Activated naive CD4-positive, alpha-beta T cell treated with anti-CD3 and anti-CD28 coated beads for 36 hours (primary cell): ENCODE measurements at regions of chr11 and their contacts with region 1.

Region 1: DNA sequence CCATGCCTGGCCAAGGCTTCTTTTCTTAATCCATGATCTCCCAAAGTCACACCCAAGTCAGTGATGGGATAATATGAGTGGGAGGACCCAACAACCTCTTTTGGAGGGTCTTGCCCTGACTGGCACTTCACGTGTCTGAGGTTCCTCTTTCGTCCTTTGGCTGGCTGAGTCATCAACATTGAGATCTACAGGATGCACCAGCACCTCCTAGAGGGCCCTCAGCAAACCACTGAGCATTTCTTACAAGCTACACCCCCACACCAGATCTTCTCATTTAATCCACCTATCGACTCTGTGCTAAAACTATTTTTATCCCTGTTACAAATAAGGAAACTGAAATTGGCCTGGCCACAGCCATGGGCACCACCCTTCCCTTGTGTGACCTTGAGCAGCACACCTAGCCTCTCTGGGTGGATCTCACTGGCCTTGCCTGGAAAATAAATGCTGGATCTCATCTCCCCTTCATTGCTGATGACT is 63.4 kb downstream of the FLI1 start:
- DNase-seq: peak; percentile 85
- H3K4me3 Mint-ChIP-seq: peak overlapping the region; percentile 14
- H3K27ac Mint-ChIP-seq: peak overlapping the region; percentile 86
- H3K4me1 Mint-ChIP-seq: peaks cover 74% of the 10 kb centered on the region
- H3K27me3 Mint-ChIP-seq: no peaks in the 10 kb centered on the region

Region 2: GRCh38 chr11:128039140-128040021 is 717.9 kb before region 1 on chr11:
- CTCF ChIA-PET with region 1: no interaction called
- intact Hi-C with region 1: loop called (anchors 5 kb)
- DNase-seq: peak; percentile 89
- H3K4me3 Mint-ChIP-seq: peak overlapping the region; percentile 40
- H3K27ac Mint-ChIP-seq: peak overlapping the region; percentile 92
- H3K4me1 Mint-ChIP-seq: peaks cover 47% of the 10 kb centered on the region
- H3K27me3 Mint-ChIP-seq: no peaks in the 10 kb centered on the region

Region 3: GRCh38 chr11:128195057-128195751 is 562.1 kb before region 1 on chr11:
- CTCF ChIA-PET with region 1: interaction called, 6 read pairs
- intact Hi-C with region 1: loop called (anchors 5 kb)
- DNase-seq: peak; percentile 77
- H3K4me3 Mint-ChIP-seq: peak overlapping the region; percentile 6
- H3K27ac Mint-ChIP-seq: peak overlapping the region; percentile 32
- H3K4me1 Mint-ChIP-seq: peaks cover 42% of the 10 kb centered on the region
- H3K27me3 Mint-ChIP-seq: no peaks in the 10 kb centered on the region

Region 4: DNA sequence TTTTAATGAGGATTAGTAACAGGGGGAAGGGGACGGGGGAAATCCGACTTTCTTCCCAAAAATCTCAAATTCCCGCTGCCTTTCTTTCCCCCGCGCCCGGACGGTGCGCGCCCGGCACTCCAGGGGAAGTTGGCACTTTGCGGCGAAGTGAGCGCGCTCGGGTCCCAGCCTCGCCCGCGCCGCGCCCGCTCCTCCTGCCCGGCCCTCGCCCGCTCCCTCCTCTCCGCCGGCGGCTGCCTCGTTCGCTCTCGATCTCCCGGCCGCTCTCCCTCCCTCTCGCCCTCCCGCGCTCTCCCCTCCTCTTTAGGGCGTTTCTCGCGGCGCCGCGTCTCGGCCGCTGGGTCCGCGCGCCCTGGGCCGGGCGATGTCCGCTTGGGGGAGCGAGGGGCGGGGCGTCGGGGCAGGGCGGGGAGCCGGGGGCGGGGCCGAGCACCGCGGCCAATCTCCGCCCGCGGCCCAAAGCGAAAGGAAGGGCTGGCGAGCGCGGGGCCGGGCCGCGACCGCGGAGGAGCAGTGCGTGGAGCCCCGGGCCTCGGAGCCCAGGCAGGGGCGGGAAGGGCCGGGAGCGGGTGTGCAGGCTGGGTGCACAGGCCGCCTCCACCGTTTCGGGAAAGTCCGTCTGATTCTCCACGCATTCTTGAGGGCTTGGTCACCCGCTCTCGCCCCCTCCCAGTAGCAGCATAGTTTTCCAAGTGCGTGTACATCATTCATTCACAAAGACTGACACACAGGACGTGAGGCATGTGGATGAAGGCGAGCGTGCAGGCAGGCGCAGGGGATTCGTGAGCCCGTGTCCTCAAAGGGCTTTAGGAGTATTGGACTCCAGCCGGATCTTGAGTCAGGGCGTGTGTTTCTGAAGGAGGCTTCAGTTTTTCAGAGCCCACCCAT is 235.0 kb before region 1 on chr11:
- CTCF ChIA-PET with region 1: no interaction called
- intact Hi-C with region 1: loop called (anchors 1 kb)
- DNase-seq: peak; percentile 92
- H3K4me3 Mint-ChIP-seq: peak overlapping the region; percentile 96
- H3K27ac Mint-ChIP-seq: peak overlapping the region; percentile 97
- H3K4me1 Mint-ChIP-seq: peaks cover 42% of the 10 kb centered on the region
- H3K27me3 Mint-ChIP-seq: no peaks in the 10 kb centered on the region

Region 5: DNA sequence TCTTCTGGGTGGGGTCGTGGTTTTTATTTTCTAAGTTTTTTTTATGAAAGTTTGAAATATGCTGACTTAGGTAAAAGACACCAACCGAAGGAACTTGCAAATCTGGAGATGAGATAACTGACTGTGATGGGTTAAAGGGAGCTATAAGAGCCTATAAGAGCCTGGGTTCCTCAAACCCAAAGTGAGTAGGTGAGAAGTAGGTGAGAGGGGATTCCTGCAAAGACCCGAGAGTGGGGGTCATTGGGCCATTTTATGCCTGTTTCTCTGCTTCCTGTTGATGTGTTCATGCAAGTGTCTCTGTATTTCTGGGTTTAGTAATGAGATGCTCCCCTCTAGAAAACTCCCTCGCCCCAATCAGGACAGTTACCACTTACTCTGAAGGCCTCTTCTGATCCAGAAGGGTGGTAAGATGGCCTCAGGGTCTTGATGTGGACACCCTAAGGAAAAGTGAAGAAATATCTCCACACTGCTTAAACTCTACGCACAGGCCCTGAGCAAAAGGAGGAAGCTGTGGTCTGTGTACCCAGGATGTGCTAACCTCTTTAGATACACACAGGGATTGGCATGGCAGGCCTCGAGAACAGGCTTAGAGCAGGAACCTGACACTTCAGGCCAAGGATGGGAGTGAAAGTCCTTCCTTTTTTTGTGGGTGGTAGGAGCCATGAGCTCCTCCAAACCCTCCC is 61.6 kb before region 1 on chr11:
- CTCF ChIA-PET with region 1: interaction called, 6 read pairs
- intact Hi-C with region 1: loop called (anchors 1 kb)
- DNase-seq: peak; percentile 58
- H3K4me3 Mint-ChIP-seq: peak overlapping the region; percentile 90
- H3K27ac Mint-ChIP-seq: peak overlapping the region; percentile 94
- H3K4me1 Mint-ChIP-seq: peaks cover 54% of the 10 kb centered on the region
- H3K27me3 Mint-ChIP-seq: peaks cover 7% of the 10 kb centered on the region

Region 6: DNA sequence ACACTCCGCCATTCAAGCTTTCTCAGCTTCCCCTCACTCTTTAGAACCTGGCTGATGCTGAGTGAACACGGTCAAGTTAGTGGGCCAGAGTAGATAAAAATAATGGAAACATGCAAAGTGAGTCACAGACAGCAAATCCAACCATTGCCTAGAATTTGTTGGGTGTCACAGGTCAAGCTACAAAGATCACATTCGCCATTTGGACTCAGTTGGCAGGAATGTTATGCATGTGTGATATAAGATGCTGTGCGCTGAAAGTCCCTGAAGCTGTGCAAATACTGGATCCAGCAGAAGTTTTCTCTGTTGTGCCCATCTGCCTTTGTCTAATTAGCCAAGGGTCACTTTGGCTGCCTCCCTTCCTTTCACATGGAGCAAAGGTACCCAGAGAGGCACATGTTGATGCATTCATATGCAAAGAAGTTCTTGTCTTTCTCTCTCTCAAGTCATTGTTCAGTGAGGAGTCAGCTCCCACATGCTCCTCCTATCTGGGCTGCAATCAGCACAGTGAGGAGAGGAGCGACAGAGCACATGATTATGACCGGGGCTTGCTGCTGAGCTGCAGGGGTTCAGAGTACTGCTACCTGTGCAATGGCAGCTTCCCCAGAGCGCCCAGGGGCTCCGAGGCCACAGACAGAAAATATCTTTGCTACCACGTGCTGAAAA is 23.7 kb before region 1 on chr11:
- CTCF ChIA-PET with region 1: interaction called, 11 read pairs
- intact Hi-C with region 1: loop called (anchors 1 kb)
- DNase-seq: peak; percentile 58
- H3K4me3 Mint-ChIP-seq: peak overlapping the region; percentile 65
- H3K27ac Mint-ChIP-seq: peak overlapping the region; percentile 32
- H3K4me1 Mint-ChIP-seq: peaks cover 93% of the 10 kb centered on the region
- H3K27me3 Mint-ChIP-seq: no peaks in the 10 kb centered on the region